ENCODE measurements at regions of chr6 and their contacts with region 1.

Region 1: DNA sequence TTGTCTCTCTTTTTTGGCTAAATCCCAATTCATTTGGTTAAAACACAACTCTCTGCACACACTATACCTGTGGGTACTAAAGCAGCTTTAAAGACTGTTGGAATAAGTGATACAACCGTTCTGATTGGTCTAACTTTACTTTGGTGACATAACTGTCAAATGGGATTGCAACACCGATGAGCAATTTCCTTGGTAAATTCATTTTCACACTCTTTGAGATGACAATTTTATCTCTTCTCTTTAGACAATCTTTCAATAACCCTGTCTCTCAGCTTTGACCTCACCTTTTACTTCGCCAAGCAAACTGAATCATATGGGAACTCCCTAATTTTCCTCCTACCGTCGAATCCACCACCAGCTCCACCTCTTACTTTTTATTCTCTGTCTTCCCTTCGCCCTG is 60.8 kb downstream of the ECT2L start:
- DNase-seq: no peak
- ATAC-seq: no peak
- H3K4me3 ChIP-seq: no peak overlapping the region
- H3K27ac ChIP-seq: no peak overlapping the region
- H3K4me1 ChIP-seq: no peaks in the 10 kb centered on the region
- H3K27me3 ChIP-seq: peaks cover 3% of the 10 kb centered on the region; the same call in 1 of the 2 replicates
- CTCF ChIP-seq: no peak

Region 2: GRCh38 chr6:138560130-138560860 is 296.4 kb before region 1 on chr6:
- CTCF ChIA-PET with region 1: no interaction called
- POLR2A ChIA-PET with region 1: no interaction called
- in situ Hi-C with region 1: no loop called
- intact Hi-C with region 1: no loop called
- DNase-seq: no peak
- ATAC-seq: no peak
- H3K4me3 ChIP-seq: no peak overlapping the region
- H3K27ac ChIP-seq: no peak overlapping the region; the same call in 1 of the 2 replicates
- H3K4me1 ChIP-seq: peaks cover 6% of the 10 kb centered on the region; the same call in 1 of the 2 replicates
- H3K27me3 ChIP-seq: no peaks in the 10 kb centered on the region
- CTCF ChIP-seq: no peak

Region 3: DNA sequence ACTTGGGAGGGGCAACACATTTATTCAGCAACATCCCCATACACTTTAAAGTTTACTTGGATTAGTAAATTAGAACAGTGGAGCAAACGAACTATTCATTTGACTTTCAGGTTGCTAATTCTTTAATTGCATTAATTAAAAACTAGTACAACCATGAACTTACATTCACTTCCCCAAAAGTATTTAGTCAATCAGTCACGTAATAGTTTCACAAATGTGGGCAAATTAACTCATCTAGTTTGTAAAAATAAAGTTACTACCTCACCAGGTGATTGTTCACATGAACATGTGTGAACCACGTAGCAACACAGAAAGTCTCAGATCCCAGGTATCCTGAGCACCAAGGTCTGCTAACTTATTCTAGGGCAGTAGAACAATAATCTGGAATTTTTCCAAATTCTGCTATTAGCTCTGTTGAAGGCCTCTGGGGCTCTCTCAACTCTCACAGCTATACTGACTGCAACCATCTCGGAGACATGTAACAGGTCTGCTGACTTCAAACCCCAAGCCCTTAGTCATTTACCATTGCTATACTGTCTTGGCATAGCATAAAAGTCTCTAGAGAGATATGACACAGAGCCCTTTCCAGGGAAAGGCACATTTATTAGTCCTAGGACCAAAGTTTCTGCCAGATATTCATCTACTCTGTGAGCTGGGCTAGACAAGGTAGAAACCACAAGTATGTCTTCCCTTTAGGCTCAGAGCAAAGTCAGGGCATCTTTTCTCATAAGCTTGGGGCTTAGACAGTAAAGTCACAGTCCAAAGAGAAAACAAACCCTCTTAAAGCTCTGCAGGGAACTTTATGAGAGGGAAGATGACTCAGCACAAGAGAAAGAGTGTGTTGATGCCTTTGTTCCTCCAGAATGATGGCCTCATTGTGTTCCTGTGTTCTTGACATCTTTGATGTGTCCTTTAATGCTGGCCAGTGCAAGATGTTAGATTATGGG is 134.0 kb before region 1 on chr6:
- CTCF ChIA-PET with region 1: no interaction called
- POLR2A ChIA-PET with region 1: no interaction called
- in situ Hi-C with region 1: no loop called
- intact Hi-C with region 1: no loop called
- DNase-seq: no peak
- ATAC-seq: peak; percentile 82
- H3K4me3 ChIP-seq: no peak overlapping the region
- H3K27ac ChIP-seq: no peak overlapping the region
- H3K4me1 ChIP-seq: 0 out of 2 replicates have a peak, but pooled peaks cover 3% of the 10 kb centered on the region
- H3K27me3 ChIP-seq: no peaks in the 10 kb centered on the region
- CTCF ChIP-seq: no peak

Region 4: DNA sequence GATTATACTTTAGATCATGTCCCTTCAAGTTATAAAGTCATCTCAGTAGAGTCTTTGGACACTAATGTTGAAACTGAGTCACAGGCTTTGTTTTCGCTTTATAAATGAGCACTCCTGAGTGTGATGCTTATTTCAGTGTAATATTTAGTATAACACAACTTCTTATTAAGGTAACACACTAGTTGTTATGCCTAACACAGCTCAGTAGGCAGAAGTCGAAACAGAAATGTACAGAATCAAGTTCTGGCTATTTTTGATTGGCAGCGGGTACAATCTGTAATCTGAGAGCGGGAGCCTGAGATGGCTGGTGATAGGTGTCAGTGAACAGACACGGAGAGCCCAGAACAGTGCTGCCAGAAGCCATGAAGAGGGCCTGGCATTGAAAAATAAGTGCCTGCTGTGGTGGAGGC is 289.7 kb after region 1 on chr6:
- CTCF ChIA-PET with region 1: interaction called, 10 read pairs
- POLR2A ChIA-PET with region 1: no interaction called
- in situ Hi-C with region 1: no loop called
- intact Hi-C with region 1: no loop called
- DNase-seq: no peak
- ATAC-seq: no peak
- H3K4me3 ChIP-seq: no peak overlapping the region
- H3K27ac ChIP-seq: no peak overlapping the region
- H3K4me1 ChIP-seq: no peaks in the 10 kb centered on the region
- H3K27me3 ChIP-seq: no peaks in the 10 kb centered on the region; the same call in 1 of the 2 replicates
- CTCF ChIP-seq: no peak

Region 5: DNA sequence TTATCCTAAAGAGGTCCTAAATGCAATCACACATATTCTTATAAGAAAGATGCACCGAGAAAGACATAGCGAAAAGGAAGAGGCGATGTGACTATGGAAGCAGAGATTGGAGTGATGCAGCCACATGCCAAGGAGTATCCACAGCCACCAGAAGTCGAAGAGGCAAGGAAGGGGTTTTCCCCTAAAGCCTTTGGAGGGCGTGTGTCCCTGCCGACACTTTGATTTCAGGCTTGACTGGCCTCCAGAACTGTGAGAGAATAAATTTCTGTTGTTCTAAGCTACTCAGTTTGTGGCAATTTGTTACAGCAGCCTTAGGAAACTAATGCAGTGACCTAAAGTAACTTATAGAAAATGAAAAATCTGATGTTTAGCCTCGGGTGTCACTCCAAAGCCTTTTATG is 697.3 kb after region 1 on chr6:
- CTCF ChIA-PET with region 1: no interaction called
- POLR2A ChIA-PET with region 1: no interaction called
- in situ Hi-C with region 1: no loop called
- intact Hi-C with region 1: no loop called
- DNase-seq: no peak
- ATAC-seq: no peak
- H3K4me3 ChIP-seq: no peak overlapping the region
- H3K27ac ChIP-seq: no peak overlapping the region
- H3K4me1 ChIP-seq: no peaks in the 10 kb centered on the region
- H3K27me3 ChIP-seq: no peaks in the 10 kb centered on the region
- CTCF ChIP-seq: no peak